Naive thymus-derived CD8-positive, alpha-beta T cell (primary cell): ENCODE measurements at regions of chr17 and their contacts with region 1.

Region 1: DNA sequence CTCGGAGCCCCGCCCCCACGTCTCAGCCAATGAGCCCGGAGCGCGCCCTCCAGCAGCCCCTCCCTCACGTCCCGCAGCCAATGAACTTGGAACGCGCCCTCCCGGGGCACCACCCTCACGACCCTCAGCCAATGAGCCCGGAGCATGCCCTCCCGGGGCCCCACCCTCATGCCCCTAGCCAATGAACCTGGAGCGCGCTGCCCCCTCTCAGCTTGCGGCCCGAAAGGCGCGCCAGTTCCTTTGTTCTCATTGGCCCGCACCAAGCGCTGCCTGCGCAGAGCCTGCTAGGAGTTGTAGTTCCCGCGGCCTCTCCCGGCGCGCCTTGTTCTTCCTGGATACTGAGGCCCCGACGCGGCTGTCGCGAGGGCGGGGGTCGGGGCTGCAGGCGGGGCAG is at the start of gene LRRC45:
- DNase-seq: peak; percentile 94 to 100 (median 100)
- ATAC-seq: peak; percentile 93 to 96
- H3K4me3 Mint-ChIP-seq: peak within 1 kb of the TSS; percentile 76 to 92 (median 84)
- H3K27ac Mint-ChIP-seq: peak within 1 kb of the TSS in 8 of 10 donors; percentile 15 to 93 (median 66)
- H3K4me1 Mint-ChIP-seq: peaks cover 12 to 29% (median 24%) of the 10 kb centered on the region in 4 donors
- H3K27me3 Mint-ChIP-seq: no peaks in the 10 kb centered on the region
- polyA plus RNA-seq, gene LRRC45: 2.7 to 6.0 (median 4.2) TPM

Region 2: DNA sequence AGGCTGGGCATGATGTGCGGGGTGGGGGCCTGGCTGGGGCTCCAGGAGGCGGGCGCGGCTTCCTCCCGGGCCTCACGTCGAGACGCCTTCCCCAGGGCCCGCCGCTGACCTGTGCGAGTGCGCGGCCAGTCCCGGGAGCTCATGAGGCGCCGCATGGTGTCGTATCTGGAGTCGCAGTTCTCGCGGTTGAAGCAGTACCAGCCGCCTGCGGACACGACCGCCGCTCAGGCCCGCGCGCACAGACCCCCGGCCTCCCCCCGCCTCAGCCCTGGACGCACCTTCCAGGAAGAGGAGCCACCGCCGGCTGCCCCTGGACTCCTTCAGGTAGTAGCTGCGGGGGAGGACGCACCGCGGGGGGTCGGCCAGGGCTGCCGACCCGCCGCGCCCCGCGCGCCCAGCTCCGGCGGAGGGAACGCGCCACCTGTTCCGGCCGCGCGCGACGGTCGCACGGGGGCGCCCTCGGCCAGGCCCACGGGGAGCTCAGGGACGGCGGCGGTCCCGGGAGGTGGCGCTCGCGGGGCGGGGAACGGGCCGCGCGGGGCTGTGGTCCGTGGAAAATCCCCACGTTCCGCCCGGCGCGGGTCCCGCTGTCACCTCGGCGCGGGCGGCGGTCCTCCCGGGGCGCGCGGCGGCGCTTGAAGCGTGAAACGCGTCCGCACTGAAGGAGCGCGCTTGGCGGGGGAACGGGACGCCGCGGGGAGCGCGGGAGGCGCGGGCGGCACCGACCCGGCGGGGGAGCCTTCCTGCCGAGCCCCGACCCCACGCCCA is 63.4 kb before region 1 on chr17:
- POLR2A ChIA-PET with region 1: interaction called, 61 read pairs
- DNase-seq: peak; percentile 70 to 92 (median 85)
- ATAC-seq: peak; percentile 96 to 97
- H3K4me3 Mint-ChIP-seq: peak overlapping the region in 5 of 10 donors; percentile 59 to 72 (median 64)
- H3K27ac Mint-ChIP-seq: peak overlapping the region in 1 of 10 donors; percentile 57
- H3K4me1 Mint-ChIP-seq: peaks cover 0 to 13% (median 6%) of the 10 kb centered on the region in 4 donors
- H3K27me3 Mint-ChIP-seq: peaks cover 0 to 19% (median 9%) of the 10 kb centered on the region in 5 donors

Region 3: GRCh38 chr17:81967533-81968395 is 55.2 kb before region 1 on chr17:
- POLR2A ChIA-PET with region 1: interaction called, 14 read pairs
- DNase-seq: peak; percentile 75 to 94 (median 86)
- ATAC-seq: peak; percentile 96 to 99
- H3K4me3 Mint-ChIP-seq: peak overlapping the region; percentile 58 to 82 (median 76)
- H3K27ac Mint-ChIP-seq: peak overlapping the region in 9 of 10 donors; percentile 59 to 92 (median 84)
- H3K4me1 Mint-ChIP-seq: peaks cover 8 to 38% (median 28%) of the 10 kb centered on the region in 4 donors
- H3K27me3 Mint-ChIP-seq: peaks cover 0 to 4% (median 0%) of the 10 kb centered on the region in 5 donors

Region 4: GRCh38 chr17:81977211-81978027 is 45.6 kb before region 1 on chr17 and contains the start of gene ASPSCR1:
- POLR2A ChIA-PET with region 1: interaction called, 12 read pairs
- DNase-seq: peak; percentile 80 to 97 (median 92)
- ATAC-seq: peak; percentile 82 to 92
- H3K4me3 Mint-ChIP-seq: peak within 1 kb of the TSS; percentile 92 to 97 (median 96)
- H3K27ac Mint-ChIP-seq: peak within 1 kb of the TSS; percentile 91 to 99 (median 97)
- H3K4me1 Mint-ChIP-seq: peaks cover 14 to 49% (median 41%) of the 10 kb centered on the region in 4 donors
- H3K27me3 Mint-ChIP-seq: peaks cover 0 to 2% (median 0%) of the 10 kb centered on the region in 5 donors
- polyA plus RNA-seq, gene ASPSCR1: 28.1 to 33.4 (median 29.1) TPM

Region 5: DNA sequence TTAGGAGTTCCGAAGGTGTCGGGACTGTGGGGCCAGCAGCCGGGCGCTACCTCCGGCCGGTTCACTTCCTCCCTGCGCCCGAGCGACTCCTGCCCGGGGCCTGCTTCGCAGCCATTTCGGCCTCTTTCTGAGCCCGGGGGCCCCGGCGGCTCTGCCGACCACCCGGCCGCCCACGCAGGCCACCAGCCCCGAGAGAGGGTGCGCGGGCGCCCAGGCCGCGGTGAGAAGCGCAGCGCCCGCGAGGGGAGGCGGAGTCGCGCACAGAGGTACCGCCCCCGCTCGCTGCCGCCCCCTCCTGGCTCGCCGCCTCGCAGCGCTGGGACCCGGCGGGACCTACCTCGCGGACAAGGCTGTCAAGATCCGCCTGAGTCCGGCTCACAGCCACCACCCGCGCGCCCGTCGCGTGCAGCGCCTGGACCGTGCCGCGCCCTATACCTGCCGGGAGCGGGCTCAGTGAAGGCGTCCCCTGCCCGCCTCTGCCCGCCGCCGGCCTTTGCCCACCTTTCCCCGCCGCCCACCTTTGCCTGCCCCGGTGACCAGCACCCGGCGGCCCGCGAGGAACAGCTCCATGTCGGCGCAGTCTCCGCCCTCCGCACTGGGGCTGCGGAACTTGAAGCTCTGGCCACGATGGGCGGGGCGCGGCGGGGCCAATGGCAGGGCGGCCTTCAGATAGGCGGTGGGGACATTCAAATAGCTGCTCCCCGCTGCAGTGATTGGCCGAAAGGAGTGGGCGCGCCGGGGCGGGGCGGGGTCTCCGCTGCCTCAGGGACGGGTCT is 14.3 kb after region 1 on chr17 and contains the start of gene DCXR:
- POLR2A ChIA-PET with region 1: interaction called, 22 read pairs
- DNase-seq: peak; percentile 90 to 97 (median 93)
- ATAC-seq: peak; percentile 92 to 93
- H3K4me3 Mint-ChIP-seq: peak within 1 kb of the TSS; percentile 81 to 96 (median 91)
- H3K27ac Mint-ChIP-seq: peak within 1 kb of the TSS; percentile 66 to 95 (median 91)
- H3K4me1 Mint-ChIP-seq: peaks cover 15 to 31% (median 28%) of the 10 kb centered on the region in 4 donors
- H3K27me3 Mint-ChIP-seq: no peaks in the 10 kb centered on the region
- polyA plus RNA-seq, gene DCXR: 113 to 185 (median 127) TPM

Region 6: GRCh38 chr17:82129095-82129494 is 106.1 kb after region 1 on chr17:
- POLR2A ChIA-PET with region 1: interaction called, 13 read pairs
- DNase-seq: no peak
- ATAC-seq: no peak
- H3K4me3 Mint-ChIP-seq: no peak overlapping the region
- H3K27ac Mint-ChIP-seq: peak overlapping the region; percentile 61 to 100 (median 100)
- H3K4me1 Mint-ChIP-seq: peaks cover 14 to 51% (median 42%) of the 10 kb centered on the region in 4 donors
- H3K27me3 Mint-ChIP-seq: no peaks in the 10 kb centered on the region